Activated T-helper 1 cell treated with anti-CD3 and anti-CD28 coated beads, Interleukin-12 subunit alpha, Interleukin-12 subunit beta, Interleukin-2, Interleukin-4 antibody, amounts not matched to agents 30 ng/mL and 10 ng/mL and 1 ng/mL, durations not matched to agents 14 hours and 24 hours and 36 hours (primary cell): ENCODE measurements at regions of chr20 and their contacts with region 1.

Region 1: GRCh38 chr20:31514159-31515071 is at the start of gene HM13:
- DNase-seq: peak; percentile 86
- H3K4me3 Mint-ChIP-seq: peak within 1 kb of the TSS; percentile 48
- H3K27ac Mint-ChIP-seq: peak within 1 kb of the TSS; percentile 24
- H3K4me1 Mint-ChIP-seq: peaks cover 7% of the 10 kb centered on the region
- H3K27me3 Mint-ChIP-seq: peaks cover 2% of the 10 kb centered on the region
- total RNA-seq, gene HM13: 215 and 228 TPM in 2 replicates

Region 2: GRCh38 chr20:31497838-31498535 is 16.4 kb before region 1 on chr20:
- intact Hi-C with region 1: loop called (anchors 1 kb)
- DNase-seq: no peak
- H3K4me3 Mint-ChIP-seq: no peak overlapping the region
- H3K27ac Mint-ChIP-seq: no peak overlapping the region
- H3K4me1 Mint-ChIP-seq: no peaks in the 10 kb centered on the region
- H3K27me3 Mint-ChIP-seq: peaks cover 9% of the 10 kb centered on the region

Region 3: GRCh38 chr20:31547017-31547675 is 32.7 kb after region 1 on chr20:
- intact Hi-C with region 1: loop called (anchors 2 kb)
- DNase-seq: peak; percentile 78
- H3K4me3 Mint-ChIP-seq: peak overlapping the region; percentile 96
- H3K27ac Mint-ChIP-seq: peak overlapping the region; percentile 97
- H3K4me1 Mint-ChIP-seq: peaks cover 15% of the 10 kb centered on the region
- H3K27me3 Mint-ChIP-seq: no peaks in the 10 kb centered on the region

Region 4: GRCh38 chr20:31560094-31560899 is 45.9 kb after region 1 on chr20:
- intact Hi-C with region 1: no loop called
- DNase-seq: peak; percentile 59
- H3K4me3 Mint-ChIP-seq: no peak overlapping the region
- H3K27ac Mint-ChIP-seq: peak overlapping the region; percentile 74
- H3K4me1 Mint-ChIP-seq: peaks cover 25% of the 10 kb centered on the region
- H3K27me3 Mint-ChIP-seq: no peaks in the 10 kb centered on the region

Region 5: DNA sequence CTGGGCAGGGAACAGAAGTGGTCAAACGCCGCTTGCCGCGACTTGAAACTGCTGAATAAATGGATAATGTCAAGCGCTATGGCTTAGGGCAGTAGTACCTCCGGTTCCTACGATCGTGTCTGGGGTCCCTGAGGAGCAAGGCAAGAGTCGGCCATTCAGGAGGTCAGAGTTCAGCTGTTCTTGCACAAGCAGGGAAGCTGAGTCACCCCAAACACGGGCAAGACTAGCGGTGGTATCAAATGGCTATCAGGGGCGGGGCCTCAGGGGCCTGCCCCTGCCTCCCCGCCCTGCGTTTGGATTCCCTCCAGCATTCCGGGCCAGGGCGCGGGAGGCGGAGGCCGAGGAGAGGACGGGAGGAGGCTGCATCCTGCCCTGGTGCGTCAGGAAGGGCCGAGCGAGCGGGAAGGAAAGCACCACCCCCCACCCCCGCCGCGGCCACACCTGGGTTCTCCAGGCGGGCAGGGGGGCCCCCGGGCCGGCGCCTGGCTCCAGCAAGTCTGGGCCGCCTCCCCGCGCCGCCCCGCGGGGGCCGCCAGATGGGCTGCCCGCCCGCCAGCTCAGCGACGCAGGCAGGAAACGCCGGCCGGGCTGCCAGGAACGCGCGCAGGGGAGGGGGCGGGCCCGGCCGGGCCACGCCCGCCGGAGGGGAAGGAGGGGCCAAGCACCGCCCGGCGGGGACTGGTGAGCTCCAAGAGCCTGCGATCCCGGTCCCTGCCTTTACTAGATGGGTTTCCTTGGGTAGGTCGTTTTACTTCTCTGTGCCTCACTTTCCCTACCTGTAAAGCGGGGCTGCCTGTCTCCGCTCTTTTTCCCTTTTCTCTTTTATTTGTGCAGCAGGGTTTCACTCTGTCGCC is 58.5 kb after region 1 on chr20:
- intact Hi-C with region 1: loop called (anchors 2 kb)
- DNase-seq: peak; percentile 80
- H3K4me3 Mint-ChIP-seq: peak overlapping the region; percentile 88
- H3K27ac Mint-ChIP-seq: peak overlapping the region; percentile 88
- H3K4me1 Mint-ChIP-seq: peaks cover 20% of the 10 kb centered on the region
- H3K27me3 Mint-ChIP-seq: no peaks in the 10 kb centered on the region

Region 6: DNA sequence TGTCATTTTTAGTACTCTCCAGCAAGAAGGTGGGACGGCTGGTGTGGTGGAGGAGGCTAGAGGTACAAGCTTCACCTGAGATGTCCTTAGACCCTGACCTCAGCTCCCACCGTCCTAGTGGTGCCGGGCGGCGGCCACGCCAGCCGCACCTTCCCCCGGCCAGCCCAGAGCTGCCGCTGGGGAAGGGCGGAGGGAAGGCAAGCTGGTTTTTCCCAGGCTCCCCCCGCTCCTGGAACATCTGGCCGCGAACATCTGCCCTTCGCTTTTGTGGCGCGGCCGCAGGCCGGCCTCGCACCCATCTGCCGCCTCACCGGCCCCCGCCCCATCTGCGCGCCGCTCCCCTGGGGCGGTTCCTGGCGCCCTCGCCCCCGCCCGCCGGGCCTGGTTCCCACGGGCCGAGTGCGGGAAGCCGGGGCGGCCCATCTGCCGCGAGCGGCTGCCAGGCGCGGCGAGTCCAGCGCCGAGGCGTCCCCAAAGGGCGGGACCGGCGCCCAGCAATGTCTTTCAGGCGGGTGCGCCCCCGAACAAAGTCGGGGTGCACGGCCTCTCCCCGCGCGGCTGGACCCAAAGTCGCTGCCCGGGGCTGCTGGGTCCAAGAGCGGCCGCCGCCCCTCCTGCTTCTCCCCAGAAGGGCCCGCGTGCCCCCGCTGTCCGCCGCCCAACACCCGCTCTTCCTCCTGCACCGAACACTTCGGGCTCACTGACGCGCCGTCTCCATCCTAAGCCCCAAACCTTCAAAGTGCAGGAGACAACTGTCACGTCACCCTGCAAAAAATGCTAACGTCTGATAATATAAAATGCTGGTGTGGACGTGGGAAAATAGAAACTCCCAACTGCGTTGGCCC is 73.4 kb after region 1 on chr20:
- intact Hi-C with region 1: no loop called
- DNase-seq: no peak
- H3K4me3 Mint-ChIP-seq: peak overlapping the region; percentile 69
- H3K27ac Mint-ChIP-seq: no peak overlapping the region
- H3K4me1 Mint-ChIP-seq: peaks cover 8% of the 10 kb centered on the region
- H3K27me3 Mint-ChIP-seq: peaks cover 36% of the 10 kb centered on the region